Calu3 (cell line): ENCODE measurements at regions of chr11 and their contacts with region 1.

Region 1: GRCh38 chr11:6362873-6363678 is 27.2 kb upstream of the SMPD1 start:
- DNase-seq: peak; percentile 81
- H3K4me3 Mint-ChIP-seq: no peak overlapping the region
- H3K27ac Mint-ChIP-seq: no peak overlapping the region
- H3K4me1 Mint-ChIP-seq: no peaks in the 10 kb centered on the region
- H3K27me3 Mint-ChIP-seq: no peaks in the 10 kb centered on the region
- CTCF ChIP-seq: peak; percentile 57

Region 2: DNA sequence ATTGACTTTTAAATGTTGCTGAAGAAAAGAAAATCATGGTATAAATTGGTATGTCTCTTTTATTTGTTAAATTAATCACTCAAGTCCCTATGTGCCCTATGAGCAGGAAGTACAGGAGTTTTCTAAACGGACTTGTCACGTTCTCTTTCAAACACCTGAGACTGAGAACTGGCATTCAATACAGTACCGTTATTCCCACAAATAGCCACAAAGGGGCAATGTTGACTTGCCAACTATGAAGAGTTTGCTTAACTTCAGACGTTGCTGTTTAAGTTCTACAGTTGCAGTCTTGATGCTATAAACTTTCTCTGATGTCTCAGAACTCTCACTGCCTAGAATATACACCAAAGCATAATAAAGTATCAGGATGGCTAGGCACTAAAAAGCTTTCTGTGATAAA is 340.1 kb before region 1 on chr11:
- CTCF ChIA-PET with region 1: interaction called, 8 read pairs
- intact Hi-C with region 1: loop called (anchors 1 kb)
- DNase-seq: peak; percentile 13
- H3K4me3 Mint-ChIP-seq: no peak overlapping the region
- H3K27ac Mint-ChIP-seq: no peak overlapping the region
- H3K4me1 Mint-ChIP-seq: no peaks in the 10 kb centered on the region
- H3K27me3 Mint-ChIP-seq: peaks cover 66% of the 10 kb centered on the region
- CTCF ChIP-seq: no peak

Region 3: GRCh38 chr11:6251120-6251733 is 111.8 kb before region 1 on chr11:
- CTCF ChIA-PET with region 1: interaction called, 21 read pairs
- intact Hi-C with region 1: no loop called
- DNase-seq: peak; percentile 83
- H3K4me3 Mint-ChIP-seq: no peak overlapping the region
- H3K27ac Mint-ChIP-seq: no peak overlapping the region
- H3K4me1 Mint-ChIP-seq: no peaks in the 10 kb centered on the region
- H3K27me3 Mint-ChIP-seq: no peaks in the 10 kb centered on the region
- CTCF ChIP-seq: peak; percentile 76

Region 4: GRCh38 chr11:6298605-6299004 is 64.5 kb before region 1 on chr11:
- CTCF ChIA-PET with region 1: interaction called, 14 read pairs
- intact Hi-C with region 1: no loop called
- DNase-seq: peak; percentile 75
- H3K4me3 Mint-ChIP-seq: no peak overlapping the region
- H3K27ac Mint-ChIP-seq: no peak overlapping the region
- H3K4me1 Mint-ChIP-seq: no peaks in the 10 kb centered on the region
- H3K27me3 Mint-ChIP-seq: no peaks in the 10 kb centered on the region
- CTCF ChIP-seq: peak; percentile 85